Mammary epithelial cell (primary cell): ENCODE measurements at regions of chr22 and their contacts with region 1.

Region 1: GRCh38 chr22:35380547-35381423 is at the start of gene HMOX1:
- DNase-seq: peak; percentile 84
- H3K4me3 ChIP-seq: peak within 1 kb of the TSS; percentile 57 to 69 (median 65)
- H3K27ac ChIP-seq: peak within 1 kb of the TSS; percentile 54
- H3K4me1 ChIP-seq: peaks cover 30% of the 10 kb centered on the region
- H3K27me3 ChIP-seq: no peaks in the 10 kb centered on the region
- CTCF ChIP-seq: peak in 1 of 2 donors; percentile 32
- total RNA-seq, gene HMOX1: 14.1 to 217 TPM

Region 2: GRCh38 chr22:35350539-35351503 is 30.0 kb before region 1 on chr22:
- CTCF ChIA-PET with region 1: no interaction called
- dilution Hi-C with region 1: no loop called
- in situ Hi-C with region 1: no loop called
- intact Hi-C with region 1: loop called (anchors 2 kb)
- DNase-seq: peak; percentile 84
- H3K4me3 ChIP-seq: peak overlapping the region; percentile 50 to 52 (median 51)
- H3K27ac ChIP-seq: peak overlapping the region; percentile 47
- H3K4me1 ChIP-seq: peaks cover 8% of the 10 kb centered on the region
- H3K27me3 ChIP-seq: no peaks in the 10 kb centered on the region
- CTCF ChIP-seq: peak; percentile 71 to 82

Region 3: DNA sequence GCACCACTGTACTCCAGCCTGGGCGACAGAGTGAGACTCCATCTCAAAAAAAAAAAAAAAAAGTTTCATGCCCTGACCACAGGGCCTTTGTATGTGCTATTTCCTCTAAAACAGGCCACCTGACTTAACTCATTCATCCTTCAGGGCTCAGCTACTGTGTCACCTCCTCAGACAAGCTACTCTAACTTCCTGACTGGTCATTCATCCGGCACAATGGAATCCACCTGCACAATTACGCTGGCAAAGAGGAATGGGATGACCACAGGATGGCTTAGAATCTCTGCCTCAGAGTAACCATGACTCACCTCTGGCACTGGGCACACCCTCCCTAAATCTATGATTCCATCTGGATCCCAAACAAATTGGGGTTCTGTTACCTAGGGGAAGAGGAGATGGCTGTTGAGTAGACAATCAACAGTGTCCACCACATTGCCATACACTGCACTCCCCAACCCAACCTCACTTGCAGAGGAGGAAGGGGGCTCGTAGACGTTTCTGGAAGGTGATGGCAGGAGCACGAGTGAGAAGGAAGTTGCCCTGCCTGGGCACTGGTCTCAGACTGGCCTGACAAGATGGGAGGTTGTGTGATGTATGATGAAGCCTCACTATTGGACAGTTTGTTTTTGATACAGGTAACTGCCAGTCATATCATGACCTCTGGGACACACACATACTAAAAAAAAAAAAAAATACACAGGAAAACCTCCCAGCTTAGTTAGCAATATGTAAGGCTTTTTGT is 22.7 kb before region 1 on chr22:
- CTCF ChIA-PET with region 1: no interaction called
- dilution Hi-C with region 1: no loop called
- in situ Hi-C with region 1: no loop called
- intact Hi-C with region 1: loop called (anchors 2 kb)
- DNase-seq: peak; percentile 96
- H3K4me3 ChIP-seq: no peak overlapping the region
- H3K27ac ChIP-seq: peak overlapping the region; percentile 51
- H3K4me1 ChIP-seq: peaks cover 6% of the 10 kb centered on the region
- H3K27me3 ChIP-seq: no peaks in the 10 kb centered on the region
- CTCF ChIP-seq: no peak

Region 4: GRCh38 chr22:35399678-35400334 is 19.0 kb after region 1 on chr22 and contains the start of gene MCM5:
- CTCF ChIA-PET with region 1: no interaction called
- dilution Hi-C with region 1: no loop called
- in situ Hi-C with region 1: no loop called
- intact Hi-C with region 1: loop called (anchors 2 kb)
- DNase-seq: peak; percentile 97
- H3K4me3 ChIP-seq: peak within 1 kb of the TSS; percentile 87 to 97 (median 89)
- H3K27ac ChIP-seq: peak within 1 kb of the TSS; percentile 78
- H3K4me1 ChIP-seq: peaks cover 10% of the 10 kb centered on the region
- H3K27me3 ChIP-seq: no peaks in the 10 kb centered on the region
- CTCF ChIP-seq: no peak
- total RNA-seq, gene MCM5: 12.0 to 72.5 TPM